ENCODE measurements at regions of chr20 and their contacts with region 1.

Region 1: GRCh38 chr20:49186535-49187329 is 1.4 kb downstream of the STAU1 start:
- DNase-seq: peak; percentile 66
- H3K4me3 Mint-ChIP-seq: peak overlapping the region; percentile 97
- H3K27ac Mint-ChIP-seq: peak overlapping the region; percentile 84
- H3K4me1 Mint-ChIP-seq: peaks cover 36% of the 10 kb centered on the region
- H3K27me3 Mint-ChIP-seq: peaks cover 13% of the 10 kb centered on the region
- CTCF ChIP-seq: no peak

Region 2: GRCh38 chr20:49132995-49133478 is 53.7 kb before region 1 on chr20:
- CTCF ChIA-PET with region 1: interaction called, 3 read pairs
- intact Hi-C with region 1: loop called (anchors 2 kb)
- DNase-seq: peak; percentile 62
- H3K4me3 Mint-ChIP-seq: no peak overlapping the region
- H3K27ac Mint-ChIP-seq: no peak overlapping the region
- H3K4me1 Mint-ChIP-seq: no peaks in the 10 kb centered on the region
- H3K27me3 Mint-ChIP-seq: no peaks in the 10 kb centered on the region
- CTCF ChIP-seq: peak; percentile 32

Region 3: GRCh38 chr20:49199729-49200293 is 13.1 kb after region 1 on chr20:
- CTCF ChIA-PET with region 1: no interaction called
- intact Hi-C with region 1: no loop called
- DNase-seq: no peak
- H3K4me3 Mint-ChIP-seq: no peak overlapping the region
- H3K27ac Mint-ChIP-seq: no peak overlapping the region
- H3K4me1 Mint-ChIP-seq: no peaks in the 10 kb centered on the region
- H3K27me3 Mint-ChIP-seq: no peaks in the 10 kb centered on the region
- CTCF ChIP-seq: no peak

Region 4: DNA sequence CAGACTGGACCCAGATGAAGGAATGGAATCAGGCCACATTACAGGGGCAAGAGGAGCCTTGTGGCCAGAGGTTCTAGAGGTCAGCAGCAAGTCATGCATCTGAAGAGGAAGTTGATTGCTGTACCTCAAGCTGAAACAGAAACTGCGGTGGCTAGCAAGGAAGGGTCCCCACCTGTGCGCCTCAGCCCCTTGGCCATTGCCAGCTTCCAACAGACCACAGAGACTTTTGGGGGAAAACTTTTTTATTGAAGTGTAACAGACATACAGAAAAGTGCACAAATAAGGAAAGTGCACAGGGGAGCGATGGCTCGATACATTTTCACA is 599.1 kb after region 1 on chr20:
- CTCF ChIA-PET with region 1: no interaction called
- intact Hi-C with region 1: no loop called
- DNase-seq: no peak
- H3K4me3 Mint-ChIP-seq: no peak overlapping the region
- H3K27ac Mint-ChIP-seq: no peak overlapping the region
- H3K4me1 Mint-ChIP-seq: peaks cover 45% of the 10 kb centered on the region
- H3K27me3 Mint-ChIP-seq: no peaks in the 10 kb centered on the region
- CTCF ChIP-seq: no peak

Measured in Calu3 (cell line).